Heart right ventricle (tissue), 16 donors: ENCODE measurements at regions of chr6 and their contacts with region 1.

Region 1: DNA sequence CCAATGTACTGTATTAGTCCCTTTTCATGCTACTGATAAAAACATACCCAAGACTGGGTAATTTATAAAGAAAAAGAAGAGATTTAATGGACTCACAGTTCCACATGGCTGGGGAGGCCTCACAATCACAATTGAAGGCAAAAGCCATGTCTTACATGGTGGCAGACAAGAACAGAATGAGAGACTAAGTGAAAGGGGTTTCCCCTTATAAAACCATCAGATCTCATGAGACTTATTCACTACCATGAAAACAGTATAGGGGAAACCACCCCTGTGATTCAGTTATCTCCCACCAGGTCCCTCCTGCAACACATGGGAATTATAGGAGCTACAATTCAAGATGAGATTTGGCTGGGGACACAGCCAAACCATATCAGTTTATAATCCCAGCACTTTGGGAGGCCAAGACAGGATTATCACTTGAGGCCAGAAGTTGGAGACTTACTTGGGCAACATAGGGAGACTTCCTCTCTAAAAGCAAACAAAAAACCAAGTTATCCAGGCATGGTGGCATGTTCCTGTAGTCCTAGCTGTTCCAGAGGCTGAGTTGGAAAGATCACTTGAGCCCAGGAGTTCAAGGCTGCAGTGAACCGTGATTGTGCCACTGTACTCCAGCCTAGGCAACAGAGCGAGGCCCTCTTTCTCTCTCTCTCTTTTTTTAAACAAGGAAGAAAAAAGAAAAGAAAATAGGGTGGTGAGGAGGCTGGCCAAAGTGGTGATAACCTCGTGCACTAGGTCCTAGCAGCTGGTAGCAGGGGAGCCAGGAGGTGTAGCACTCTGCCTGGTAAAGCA is 22.9 kb upstream of the DDR1 start:
- DNase-seq: no peak
- ATAC-seq: no peak
- H3K4me3 ChIP-seq: no peak overlapping the region
- H3K27ac ChIP-seq: no peak overlapping the region
- H3K4me1 ChIP-seq: no peaks in the 10 kb centered on the region
- H3K27me3 ChIP-seq: peaks cover 0 to 3% (median 0%) of the 10 kb centered on the region in 7 donors
- CTCF ChIP-seq: no peak

Region 2: DNA sequence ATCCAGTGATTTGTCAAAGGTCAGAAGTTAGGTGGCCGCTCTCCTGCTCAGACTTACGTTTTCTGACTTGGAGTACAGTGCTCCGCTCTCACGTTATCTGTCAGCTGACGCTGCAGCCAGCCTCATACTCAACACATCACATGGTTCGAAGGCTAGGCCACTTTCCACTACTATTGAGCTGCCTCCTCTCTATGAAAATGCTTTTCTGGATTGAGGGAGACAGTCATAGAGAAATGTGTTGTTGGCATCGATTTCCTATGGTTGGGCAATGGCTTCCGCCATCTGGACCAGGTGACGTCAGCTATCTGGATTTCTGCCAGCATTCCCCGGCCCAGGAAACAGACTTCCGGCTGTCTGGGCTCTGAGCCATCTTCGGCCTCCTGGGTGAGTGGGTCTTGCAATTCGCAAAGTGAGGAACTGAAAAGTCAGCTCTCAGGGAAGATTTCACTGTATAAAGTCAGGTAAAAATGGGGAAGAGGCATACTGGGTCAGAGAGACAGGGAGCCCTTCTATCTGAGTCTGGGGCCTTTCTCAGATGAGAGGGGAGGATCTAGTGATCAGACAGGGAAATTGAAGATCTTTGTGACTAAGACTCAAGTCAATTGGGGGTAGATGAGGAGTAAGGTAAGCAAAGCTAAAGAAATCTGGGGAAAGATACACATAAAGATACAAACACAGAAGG is 79.6 kb before region 1 on chr6:
- intact Hi-C with region 1: no loop called
- DNase-seq: peak; percentile 93 to 97
- ATAC-seq: peak; percentile 89 to 92 (median 91)
- H3K4me3 ChIP-seq: peak overlapping the region in 6 of 10 donors; percentile 2 to 33 (median 20)
- H3K27ac ChIP-seq: peak overlapping the region; percentile 74 to 97 (median 94)
- H3K4me1 ChIP-seq: peaks cover 25 to 100% (median 51%) of the 10 kb centered on the region in 9 donors
- H3K27me3 ChIP-seq: no peaks in the 10 kb centered on the region
- CTCF ChIP-seq: no peak

Region 3: DNA sequence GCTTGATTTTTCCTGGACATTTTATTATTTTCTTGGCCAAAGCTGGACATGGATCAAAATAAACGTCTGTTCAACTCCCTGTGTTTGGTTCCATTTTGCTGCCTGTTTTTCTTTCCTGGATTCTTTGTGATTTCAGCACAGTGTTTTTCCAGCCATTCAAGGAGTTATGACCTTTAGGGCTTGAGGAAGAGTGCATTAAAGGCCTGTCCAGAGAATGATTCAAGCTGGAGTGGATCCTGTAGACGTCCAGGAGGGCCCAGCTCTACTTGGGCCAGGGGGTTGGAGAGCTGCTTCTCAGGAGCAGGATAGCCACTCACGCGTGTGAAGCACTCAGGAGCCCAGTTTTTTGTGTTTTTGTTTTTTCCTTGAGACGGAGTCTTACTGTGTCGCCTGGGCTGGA is 60.6 kb before region 1 on chr6:
- intact Hi-C with region 1: loop called in 1 of 10 experiments (anchors 2 kb)
- DNase-seq: peak in 1 of 2 donors; percentile 41
- ATAC-seq: peak; percentile 61 to 90 (median 79)
- H3K4me3 ChIP-seq: no peak overlapping the region
- H3K27ac ChIP-seq: peak overlapping the region; percentile 10 to 83 (median 66)
- H3K4me1 ChIP-seq: peaks cover 0 to 35% (median 3%) of the 10 kb centered on the region in 9 donors
- H3K27me3 ChIP-seq: no peaks in the 10 kb centered on the region
- CTCF ChIP-seq: no peak